CD8-positive, alpha-beta memory T cell (primary cell): ENCODE measurements at regions of chr22 and their contacts with region 1.

Region 1: DNA sequence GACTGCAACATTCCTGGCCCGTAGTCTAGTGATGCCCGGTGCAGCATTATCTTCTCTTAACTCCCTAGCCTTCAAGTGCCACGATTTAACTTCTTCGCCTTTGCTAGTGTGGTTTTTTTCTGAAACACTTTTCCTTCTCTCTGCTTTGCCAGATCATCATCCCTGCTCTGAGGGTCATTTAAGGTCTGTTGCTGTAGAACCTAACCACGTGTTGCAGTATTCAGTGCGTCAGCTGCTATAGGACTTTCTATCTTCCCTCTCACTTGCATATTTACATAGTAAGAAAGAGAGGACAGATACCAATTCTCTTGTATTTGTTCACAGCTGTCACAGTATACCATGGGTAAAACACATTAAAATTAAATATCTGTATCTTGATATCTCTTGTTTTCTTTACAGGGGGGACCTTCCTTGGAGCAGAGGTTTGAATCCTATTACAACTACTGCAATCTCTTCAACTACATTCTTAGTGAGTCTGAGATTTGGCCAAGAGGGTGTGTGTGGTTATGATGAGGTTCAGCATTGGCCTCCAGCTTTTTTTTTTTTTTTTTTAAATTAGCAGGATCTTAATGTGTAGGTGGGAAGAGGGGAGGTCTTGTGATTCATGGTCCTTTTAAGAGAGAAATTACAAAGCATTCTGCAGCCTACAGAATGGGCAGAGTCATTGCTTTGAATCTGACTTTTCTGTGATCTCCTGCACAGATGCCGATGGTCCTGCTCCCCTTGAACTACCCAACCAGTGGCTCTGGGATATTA is 13.5 kb downstream of the EIF3L start:
- DNase-seq: no peak
- H3K4me3 ChIP-seq: no peak overlapping the region
- H3K4me3 Mint-ChIP-seq: no peak overlapping the region
- H3K27ac ChIP-seq: no peak overlapping the region
- H3K27ac Mint-ChIP-seq: peak overlapping the region in 2 of 8 donors; percentile 1 to 69
- H3K4me1 ChIP-seq: no peaks in the 10 kb centered on the region
- H3K4me1 Mint-ChIP-seq: peaks cover 7 to 12% (median 7%) of the 10 kb centered on the region in 3 donors
- H3K27me3 ChIP-seq: no peaks in the 10 kb centered on the region
- H3K27me3 Mint-ChIP-seq: no peaks in the 10 kb centered on the region

Region 2: GRCh38 chr22:37777122-37777687 is 85.5 kb before region 1 on chr22:
- CTCF ChIA-PET with region 1: no interaction called
- POLR2A ChIA-PET with region 1: no interaction called
- DNase-seq: no peak
- H3K4me3 ChIP-seq: no peak overlapping the region
- H3K4me3 Mint-ChIP-seq: no peak overlapping the region
- H3K27ac ChIP-seq: no peak overlapping the region
- H3K27ac Mint-ChIP-seq: no peak overlapping the region
- H3K4me1 ChIP-seq: no peaks in the 10 kb centered on the region
- H3K4me1 Mint-ChIP-seq: no peaks in the 10 kb centered on the region
- H3K27me3 ChIP-seq: no peaks in the 10 kb centered on the region
- H3K27me3 Mint-ChIP-seq: peaks cover 0 to 2% of the 10 kb centered on the region in 2 donors

Region 3: DNA sequence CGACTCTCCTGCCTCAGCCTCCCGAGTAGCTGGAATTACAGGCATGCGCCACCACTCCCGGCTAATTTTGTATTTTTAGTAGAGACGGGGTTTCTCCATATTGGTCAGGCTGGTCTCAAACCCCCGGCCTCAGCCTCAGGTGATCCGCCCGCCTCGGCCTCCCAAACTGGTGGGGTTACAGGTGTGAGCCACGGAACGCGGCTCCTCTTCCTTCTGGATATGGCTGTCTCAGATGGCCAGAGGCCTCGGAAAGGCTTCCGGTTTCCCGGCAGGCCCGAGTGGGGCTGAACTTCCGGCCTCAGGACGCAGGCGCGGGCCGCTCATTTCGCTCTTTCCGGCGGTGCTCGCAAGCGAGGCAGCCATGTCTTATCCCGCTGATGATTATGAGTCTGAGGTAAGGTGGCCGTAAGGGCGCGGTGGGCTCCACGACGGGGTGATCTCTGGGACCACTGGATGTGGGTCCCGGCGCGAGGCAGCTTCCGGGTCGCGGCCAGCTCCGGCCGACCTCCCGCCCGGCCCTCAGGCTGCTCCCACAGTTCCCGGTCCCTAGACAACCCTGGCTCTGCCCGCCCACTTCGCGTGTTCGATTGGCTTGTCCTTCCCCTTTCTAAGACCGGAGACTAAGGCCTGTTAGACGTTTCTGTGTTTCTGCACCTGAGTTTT is 13.5 kb before region 1 on chr22 and contains the start of gene EIF3L:
- CTCF ChIA-PET with region 1: interaction called, 13 read pairs
- POLR2A ChIA-PET with region 1: interaction called, 9 read pairs
- DNase-seq: peak; percentile 79 to 91 (median 84)
- H3K4me3 ChIP-seq: peak within 1 kb of the TSS; percentile 79
- H3K4me3 Mint-ChIP-seq: peak within 1 kb of the TSS; percentile 90 to 99 (median 95)
- H3K27ac ChIP-seq: peak within 1 kb of the TSS; percentile 85
- H3K27ac Mint-ChIP-seq: peak within 1 kb of the TSS; percentile 94 to 99 (median 98)
- H3K4me1 ChIP-seq: peaks cover 40% of the 10 kb centered on the region
- H3K4me1 Mint-ChIP-seq: peaks cover 40 to 56% (median 50%) of the 10 kb centered on the region in 3 donors
- H3K27me3 ChIP-seq: no peaks in the 10 kb centered on the region
- H3K27me3 Mint-ChIP-seq: no peaks in the 10 kb centered on the region
- total RNA-seq, gene EIF3L: 549 to 556 TPM

Region 4: DNA sequence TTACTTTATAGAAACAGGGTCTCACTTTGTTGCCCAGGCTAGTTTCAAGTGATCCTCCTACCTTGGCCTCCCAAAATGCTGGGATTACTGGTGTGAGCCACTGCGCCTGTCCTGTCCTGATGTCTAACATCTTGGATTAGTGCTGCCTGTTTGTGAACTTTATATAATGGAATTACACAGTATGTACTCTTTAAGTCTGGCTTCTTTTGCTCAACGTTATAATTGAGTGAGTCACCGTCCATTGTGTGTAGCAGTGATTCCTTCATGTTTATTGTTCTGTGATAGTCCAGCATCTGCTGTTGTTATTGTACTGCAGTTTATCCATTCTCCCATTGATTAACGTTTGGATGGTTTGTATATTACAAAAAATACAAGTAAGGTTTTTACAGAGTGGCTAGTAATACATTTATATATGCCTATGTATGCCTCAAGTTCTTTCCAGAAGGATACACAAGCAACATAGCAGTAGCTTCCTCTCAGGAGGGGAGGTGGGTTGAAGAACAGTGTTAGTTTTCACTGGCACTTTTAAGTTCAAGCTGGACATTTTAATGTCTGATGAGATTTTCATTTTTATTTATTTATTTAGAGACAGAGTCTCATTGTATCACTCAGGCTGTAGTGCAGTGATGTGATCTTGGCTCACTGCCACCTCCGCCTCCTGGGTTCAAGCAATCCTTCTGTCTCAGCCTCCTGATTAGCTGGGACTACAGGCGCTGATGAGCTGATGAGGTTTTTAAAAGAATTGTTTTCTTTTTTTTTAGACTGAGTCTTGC is 18.1 kb after region 1 on chr22:
- CTCF ChIA-PET with region 1: interaction called, 16 read pairs
- POLR2A ChIA-PET with region 1: interaction called, 7 read pairs
- DNase-seq: no peak
- H3K4me3 ChIP-seq: no peak overlapping the region
- H3K4me3 Mint-ChIP-seq: no peak overlapping the region
- H3K27ac ChIP-seq: no peak overlapping the region
- H3K27ac Mint-ChIP-seq: no peak overlapping the region
- H3K4me1 ChIP-seq: no peaks in the 10 kb centered on the region
- H3K4me1 Mint-ChIP-seq: peaks cover 12 to 18% (median 13%) of the 10 kb centered on the region in 3 donors
- H3K27me3 ChIP-seq: no peaks in the 10 kb centered on the region
- H3K27me3 Mint-ChIP-seq: no peaks in the 10 kb centered on the region